Naive thymus-derived CD8-positive, alpha-beta T cell (primary cell): ENCODE measurements at regions of chr12 and their contacts with region 1.

Region 1: DNA sequence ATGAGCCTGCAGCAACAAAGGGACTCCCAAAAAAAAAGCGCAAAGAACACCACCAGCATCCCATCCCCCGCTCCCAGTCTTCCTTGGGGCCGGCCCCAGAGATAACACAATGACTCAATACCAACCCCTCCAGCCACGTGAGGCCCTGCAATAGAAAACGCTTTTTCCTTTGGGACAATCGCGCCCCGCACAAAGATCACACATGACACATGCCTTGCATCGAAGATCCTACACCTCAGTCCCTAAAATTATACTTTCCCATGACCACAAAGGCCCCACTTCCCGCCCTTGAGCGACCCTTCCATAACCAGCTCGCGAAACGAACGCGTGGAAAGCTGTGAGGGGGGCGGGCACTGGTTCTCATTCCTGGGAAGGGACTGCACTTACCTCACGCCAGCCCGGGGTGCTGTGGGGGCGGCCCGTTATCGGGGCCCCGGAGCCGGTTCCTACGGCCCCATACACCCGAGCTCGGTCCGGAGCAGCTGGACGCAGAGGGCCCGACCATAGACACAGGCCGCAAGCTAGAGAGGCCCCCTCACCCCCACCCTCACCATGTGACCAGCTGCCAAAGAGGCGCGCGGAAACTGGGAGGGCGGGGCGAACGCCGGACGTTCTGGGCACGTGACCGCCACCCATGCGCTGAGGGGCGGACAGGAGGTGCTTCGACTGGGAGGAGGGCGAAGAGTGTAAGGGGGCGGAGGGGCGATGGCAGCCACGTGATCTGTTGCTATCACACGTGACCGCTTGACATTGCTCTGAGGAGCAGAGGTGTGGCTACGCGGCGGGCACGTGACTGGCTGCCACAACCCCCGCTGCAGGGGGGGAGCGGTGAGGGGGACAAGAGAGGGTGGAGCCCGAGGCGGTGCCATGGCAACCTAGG is at the start of gene CDK4:
- DNase-seq: peak; percentile 94 to 100 (median 99)
- ATAC-seq: peak; percentile 60 to 78
- H3K4me3 Mint-ChIP-seq: peak within 1 kb of the TSS; percentile 89 to 96 (median 94)
- H3K27ac Mint-ChIP-seq: peak within 1 kb of the TSS; percentile 91 to 100 (median 97)
- H3K4me1 Mint-ChIP-seq: peaks cover 40 to 57% (median 52%) of the 10 kb centered on the region in 4 donors
- H3K27me3 Mint-ChIP-seq: no peaks in the 10 kb centered on the region
- polyA plus RNA-seq, gene CDK4: 71.3 to 101 (median 80.5) TPM

Region 2: GRCh38 chr12:57687862-57688261 is 64.2 kb before region 1 on chr12:
- POLR2A ChIA-PET with region 1: no interaction called
- DNase-seq: no peak
- ATAC-seq: no peak
- H3K4me3 Mint-ChIP-seq: no peak overlapping the region
- H3K27ac Mint-ChIP-seq: no peak overlapping the region
- H3K4me1 Mint-ChIP-seq: peaks cover 0 to under 1% (median 0%) of the 10 kb centered on the region in 4 donors
- H3K27me3 Mint-ChIP-seq: peaks cover 10 to 49% (median 25%) of the 10 kb centered on the region in 5 donors

Region 3: DNA sequence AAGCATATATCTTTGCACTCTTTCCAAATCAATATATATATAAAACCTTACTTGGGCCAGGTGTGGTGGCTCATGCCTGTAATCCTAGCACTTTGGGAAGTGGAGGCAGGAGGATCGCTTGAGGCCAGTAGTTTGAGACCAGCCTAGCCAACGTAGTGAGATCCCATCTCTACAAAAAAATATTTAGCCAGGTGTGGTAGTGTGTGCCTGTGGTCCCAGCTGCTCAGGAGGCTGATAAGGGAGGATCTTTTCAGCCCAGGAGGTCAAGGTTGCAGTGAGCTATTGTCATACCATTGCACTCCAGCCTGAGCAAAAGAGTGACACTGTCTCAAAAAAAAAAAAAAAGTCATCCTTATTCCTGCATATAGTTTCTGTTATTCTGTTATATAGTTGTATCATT is 43.7 kb before region 1 on chr12:
- POLR2A ChIA-PET with region 1: no interaction called
- DNase-seq: no peak
- ATAC-seq: no peak
- H3K4me3 Mint-ChIP-seq: no peak overlapping the region
- H3K27ac Mint-ChIP-seq: no peak overlapping the region
- H3K4me1 Mint-ChIP-seq: peaks cover 0 to 7% (median 0%) of the 10 kb centered on the region in 4 donors
- H3K27me3 Mint-ChIP-seq: no peaks in the 10 kb centered on the region

Region 4: DNA sequence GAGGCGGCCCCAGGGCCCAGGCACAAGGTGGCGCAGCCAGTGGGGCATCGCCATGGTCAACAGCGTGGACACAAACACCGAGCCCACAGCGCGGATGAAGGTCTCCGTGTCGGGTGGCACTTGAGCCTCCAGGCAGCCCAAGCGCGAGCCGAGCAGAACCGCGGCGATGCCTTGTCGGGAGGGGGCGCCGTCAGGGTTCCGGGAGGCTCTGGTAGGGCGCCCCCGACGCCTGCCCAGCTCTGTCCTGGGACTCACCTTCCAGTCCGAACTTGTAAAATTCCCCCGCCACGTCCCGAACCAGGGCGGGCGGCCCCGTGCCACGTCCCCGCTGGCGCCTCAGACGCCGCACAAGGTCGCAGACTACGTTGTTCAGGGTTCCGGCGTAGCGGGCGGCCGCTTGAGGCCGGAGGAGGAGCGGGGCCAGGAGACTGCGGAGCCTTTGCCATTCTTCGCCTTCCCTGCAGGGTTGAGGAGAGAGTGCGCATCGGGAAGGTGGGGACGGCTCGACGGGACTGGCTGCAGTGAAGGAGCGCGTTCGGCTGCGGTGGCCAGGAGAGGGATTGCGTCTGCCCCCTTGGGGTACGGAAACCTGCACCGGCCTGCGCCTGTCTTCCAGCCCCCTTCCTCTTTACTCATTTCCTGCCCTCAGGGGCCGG is 13.1 kb after region 1 on chr12:
- POLR2A ChIA-PET with region 1: interaction called, 17 read pairs
- DNase-seq: peak in 8 of 10 donors; percentile 35 to 67 (median 46)
- ATAC-seq: peak; percentile 79 to 81
- H3K4me3 Mint-ChIP-seq: peak overlapping the region; percentile 83 to 94 (median 88)
- H3K27ac Mint-ChIP-seq: peak overlapping the region in 7 of 10 donors; percentile 18 to 78 (median 37)
- H3K4me1 Mint-ChIP-seq: peaks cover 20 to 43% (median 33%) of the 10 kb centered on the region in 4 donors
- H3K27me3 Mint-ChIP-seq: peaks cover 5 to 27% (median 17%) of the 10 kb centered on the region in 5 donors

Region 5: GRCh38 chr12:57782608-57783465 is 30.8 kb after region 1 on chr12 and contains the start of gene TSFM:
- POLR2A ChIA-PET with region 1: interaction called, 12 read pairs
- DNase-seq: peak; percentile 89 to 98 (median 96)
- ATAC-seq: peak; percentile 87 to 92
- H3K4me3 Mint-ChIP-seq: peak within 1 kb of the TSS; percentile 99 to 100 (median 99)
- H3K27ac Mint-ChIP-seq: peak within 1 kb of the TSS; percentile 97 to 100 (median 99)
- H3K4me1 Mint-ChIP-seq: peaks cover 30 to 55% (median 48%) of the 10 kb centered on the region in 4 donors
- H3K27me3 Mint-ChIP-seq: peaks cover 0 to 4% (median 0%) of the 10 kb centered on the region in 5 donors
- polyA plus RNA-seq, gene TSFM: 25.5 to 31.0 (median 28.3) TPM